ENCODE measurements at regions of chr3 and their contacts with region 1.

Region 1: DNA sequence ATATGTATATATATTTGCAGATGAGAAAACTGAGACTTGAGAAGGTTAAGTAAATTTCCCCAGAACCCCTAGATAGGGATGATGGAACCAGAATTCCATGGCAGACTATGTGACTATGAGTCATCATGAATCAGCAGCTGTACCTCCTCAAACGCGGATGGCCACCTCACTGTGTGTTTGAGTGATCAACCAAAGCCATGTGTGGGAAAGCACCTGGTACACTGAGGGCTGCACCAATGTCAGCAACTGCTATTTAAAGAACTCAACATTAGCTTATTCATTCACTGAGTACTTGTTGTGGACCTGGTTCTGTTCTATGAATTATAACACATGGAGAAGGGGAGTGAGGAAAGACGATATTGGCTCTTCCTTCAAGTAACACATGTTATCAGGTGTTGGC is 377.0 kb downstream of the GAP43 start:
- DNase-seq: peak; percentile 9
- CTCF ChIP-seq: no peak

Region 2: DNA sequence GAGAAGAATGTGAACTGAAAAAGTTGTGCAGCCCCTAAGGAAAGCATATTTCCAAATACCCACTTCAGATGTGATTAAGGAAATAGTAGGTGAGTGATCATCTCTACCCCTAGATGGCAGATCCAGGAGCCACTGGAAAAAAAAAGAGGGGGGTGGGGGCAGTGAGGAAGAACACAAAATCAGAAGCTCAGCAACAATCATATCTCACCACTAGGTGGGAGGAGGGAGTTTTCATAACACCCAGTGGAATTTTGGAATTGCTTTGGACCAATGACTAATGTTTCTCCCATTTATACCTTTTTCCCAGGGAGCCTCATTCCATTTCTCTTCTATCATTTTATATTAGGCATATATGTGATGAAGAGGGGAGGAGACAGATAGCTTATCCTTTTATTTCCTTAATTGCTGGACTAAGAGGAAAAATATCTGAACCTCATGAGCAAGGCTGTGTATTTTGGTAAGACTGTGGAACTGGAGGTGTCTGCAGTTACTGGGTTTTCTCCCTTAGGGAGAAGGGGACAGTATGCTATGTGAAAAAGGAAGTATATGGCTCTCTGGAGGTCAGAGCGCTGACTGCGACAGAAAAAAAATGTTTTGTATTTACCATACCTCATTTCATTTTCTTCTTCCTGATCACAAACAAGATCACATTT is 13.6 kb before region 1 on chr3:
- CTCF ChIA-PET with region 1: interaction called, 14 read pairs
- POLR2A ChIA-PET with region 1: no interaction called
- DNase-seq: no peak
- CTCF ChIP-seq: no peak

Measured in GM10248 (cell line).